PC-9 (cell line): ENCODE measurements at regions of chr10 and their contacts with region 1.

Region 1: GRCh38 chr10:21259351-21259750 is 266.1 kb downstream of the SKIDA1 start:
- DNase-seq: no peak
- H3K4me3 ChIP-seq: no peak overlapping the region
- H3K27ac ChIP-seq: no peak overlapping the region
- H3K4me1 ChIP-seq: peaks cover 6% of the 10 kb centered on the region
- H3K27me3 ChIP-seq: no peaks in the 10 kb centered on the region
- CTCF ChIP-seq: no peak

Region 2: GRCh38 chr10:20221356-20221755 is 1038.0 kb before region 1 on chr10:
- CTCF ChIA-PET with region 1: no interaction called
- POLR2A ChIA-PET with region 1: interaction called, 15 read pairs
- intact Hi-C with region 1: no loop called
- DNase-seq: no peak
- H3K4me3 ChIP-seq: no peak overlapping the region
- H3K27ac ChIP-seq: no peak overlapping the region
- H3K4me1 ChIP-seq: no peaks in the 10 kb centered on the region
- H3K27me3 ChIP-seq: no peaks in the 10 kb centered on the region
- CTCF ChIP-seq: no peak